ENCODE measurements at regions of chr5 and their contacts with region 1.

Region 1: DNA sequence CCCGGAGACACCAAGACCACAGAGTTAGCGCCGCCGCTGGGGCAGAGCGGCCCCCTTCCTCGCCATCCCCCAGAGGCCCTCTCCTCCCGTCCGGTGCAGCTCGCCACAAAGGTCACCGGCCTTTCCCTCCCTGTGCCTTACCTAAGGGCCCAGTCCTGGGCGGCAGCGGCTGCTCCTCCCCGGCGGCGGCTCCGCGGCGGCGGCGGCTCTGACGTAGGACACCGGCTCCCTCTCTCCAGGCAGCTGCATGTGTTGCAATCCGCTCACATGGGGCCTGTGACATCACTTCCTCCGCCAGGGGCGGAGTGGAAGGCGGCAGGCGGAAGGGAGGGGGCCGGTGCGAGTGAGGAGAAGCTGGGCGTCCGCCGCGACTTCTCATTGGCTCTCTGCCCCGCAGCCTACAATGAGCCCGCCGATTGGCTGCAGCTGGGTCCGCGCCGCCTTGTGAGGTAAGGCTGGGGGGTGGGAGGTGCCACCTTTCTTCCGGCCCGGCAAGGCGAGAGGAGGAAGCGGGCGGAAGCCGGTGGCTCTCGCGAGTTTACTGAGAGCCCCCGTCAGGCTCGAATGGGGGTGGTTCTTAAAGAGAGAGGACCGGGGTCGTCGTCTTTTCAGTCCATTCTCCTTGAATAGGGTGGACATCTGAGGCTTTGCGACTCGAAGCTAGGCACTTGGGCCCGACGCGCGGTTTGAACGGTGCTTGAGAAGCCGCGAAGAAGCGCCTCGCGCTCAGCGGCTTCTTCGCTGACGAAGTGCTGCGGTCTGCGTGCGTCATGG is at the start of gene ETF1:
- DNase-seq: peak; percentile 99 to 100 (median 99)
- ATAC-seq: peak; percentile 89
- H3K4me3 ChIP-seq: peak within 1 kb of the TSS; percentile 86 to 90
- H3K4me3 Mint-ChIP-seq: peak within 1 kb of the TSS; percentile 100
- H3K27ac ChIP-seq: peak within 1 kb of the TSS; percentile 98 to 100
- H3K27ac Mint-ChIP-seq: peak within 1 kb of the TSS; percentile 100
- H3K4me1 ChIP-seq: peaks cover 52% of the 10 kb centered on the region
- H3K4me1 Mint-ChIP-seq: peaks cover 72% of the 10 kb centered on the region
- H3K27me3 ChIP-seq: no peaks in the 10 kb centered on the region
- H3K27me3 Mint-ChIP-seq: no peaks in the 10 kb centered on the region
- CTCF ChIP-seq: no peak
- total RNA-seq, gene ETF1: 241 to 247 TPM

Region 2: GRCh38 chr5:138035605-138036537 is 507.3 kb before region 1 on chr5:
- CTCF ChIA-PET with region 1: no interaction called
- POLR2A ChIA-PET with region 1: no interaction called
- intact Hi-C with region 1: loop called (anchors 10 kb)
- DNase-seq: peak; percentile 21 to 90 (median 61)
- ATAC-seq: peak; percentile 40
- H3K4me3 ChIP-seq: no peak overlapping the region
- H3K4me3 Mint-ChIP-seq: no peak overlapping the region
- H3K27ac ChIP-seq: no peak overlapping the region
- H3K27ac Mint-ChIP-seq: no peak overlapping the region
- H3K4me1 ChIP-seq: peaks cover 23% of the 10 kb centered on the region
- H3K4me1 Mint-ChIP-seq: peaks cover 30% of the 10 kb centered on the region
- H3K27me3 ChIP-seq: no peaks in the 10 kb centered on the region
- H3K27me3 Mint-ChIP-seq: no peaks in the 10 kb centered on the region
- CTCF ChIP-seq: peak; percentile 99

Region 3: GRCh38 chr5:138264183-138264582 is 279.0 kb before region 1 on chr5:
- CTCF ChIA-PET with region 1: no interaction called
- POLR2A ChIA-PET with region 1: no interaction called
- intact Hi-C with region 1: no loop called
- DNase-seq: no peak
- ATAC-seq: no peak
- H3K4me3 ChIP-seq: no peak overlapping the region
- H3K4me3 Mint-ChIP-seq: no peak overlapping the region
- H3K27ac ChIP-seq: no peak overlapping the region
- H3K27ac Mint-ChIP-seq: no peak overlapping the region
- H3K4me1 ChIP-seq: no peaks in the 10 kb centered on the region
- H3K4me1 Mint-ChIP-seq: no peaks in the 10 kb centered on the region
- H3K27me3 ChIP-seq: peaks cover 0 to 2% of the 10 kb centered on the region in 2 experiments
- H3K27me3 Mint-ChIP-seq: peaks cover 14% of the 10 kb centered on the region
- CTCF ChIP-seq: no peak

Region 4: DNA sequence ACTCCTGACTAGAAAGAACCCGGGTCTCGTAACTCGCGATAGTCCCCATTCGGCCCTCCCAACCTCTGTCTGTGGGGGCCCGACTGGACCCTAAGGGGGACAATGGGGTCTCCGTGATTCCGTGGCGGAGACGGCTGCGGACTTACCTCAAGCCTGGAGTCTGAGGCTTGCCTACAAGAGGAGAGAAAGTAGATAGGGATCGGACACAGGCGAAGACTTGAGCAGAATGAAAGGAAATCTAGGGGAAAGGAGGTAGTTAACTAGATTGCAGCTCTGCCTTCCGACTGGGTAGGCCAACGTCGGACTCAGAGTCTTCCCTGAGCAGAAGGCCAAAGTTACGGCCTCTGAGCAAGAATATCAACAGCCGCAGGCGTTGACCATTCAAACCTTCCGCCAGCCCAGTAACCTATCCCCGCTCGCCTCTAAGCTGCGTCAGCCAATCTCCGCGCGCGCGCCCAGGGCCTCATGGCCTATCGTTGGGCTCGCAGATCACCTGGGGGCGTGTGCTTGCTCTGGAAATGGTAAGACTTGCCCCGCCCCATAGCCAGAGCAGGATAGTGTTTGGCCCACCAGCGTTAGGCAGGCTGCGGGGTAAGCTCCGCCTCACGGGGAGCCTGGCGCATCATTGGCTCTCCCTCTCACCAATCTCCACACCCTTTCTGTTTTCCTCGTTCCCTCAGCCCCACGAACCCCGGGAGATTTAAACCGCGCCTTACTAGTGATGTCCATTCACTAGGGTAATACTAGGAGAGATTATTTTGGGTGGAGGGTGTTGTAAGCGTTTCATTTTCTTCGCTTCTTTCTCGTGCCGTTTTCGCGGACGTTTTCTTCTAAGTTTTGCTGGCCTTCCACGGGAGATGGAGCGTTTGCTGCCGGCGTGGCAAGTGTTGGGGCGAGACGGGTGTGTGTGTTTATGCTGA is 211.4 kb before region 1 on chr5 and contains the start of gene CDC25C:
- CTCF ChIA-PET with region 1: no interaction called
- POLR2A ChIA-PET with region 1: interaction called, 5 read pairs
- intact Hi-C with region 1: loop called (anchors 1 to 5 kb)
- DNase-seq: peak; percentile 91 to 99 (median 95)
- ATAC-seq: peak; percentile 100
- H3K4me3 ChIP-seq: peak within 1 kb of the TSS; percentile 52 to 69
- H3K4me3 Mint-ChIP-seq: peak within 1 kb of the TSS; percentile 86
- H3K27ac ChIP-seq: peak within 1 kb of the TSS in 1 of 2 experiments; percentile 58
- H3K27ac Mint-ChIP-seq: peak within 1 kb of the TSS; percentile 45
- H3K4me1 ChIP-seq: peaks cover 5% of the 10 kb centered on the region
- H3K4me1 Mint-ChIP-seq: peaks cover 16% of the 10 kb centered on the region
- H3K27me3 ChIP-seq: no peaks in the 10 kb centered on the region
- H3K27me3 Mint-ChIP-seq: no peaks in the 10 kb centered on the region
- CTCF ChIP-seq: no peak
- total RNA-seq, gene CDC25C: not detected

Region 5: GRCh38 chr5:138391859-138392386 is 151.2 kb before region 1 on chr5:
- CTCF ChIA-PET with region 1: no interaction called
- POLR2A ChIA-PET with region 1: no interaction called
- intact Hi-C with region 1: no loop called
- DNase-seq: no peak
- ATAC-seq: no peak
- H3K4me3 ChIP-seq: no peak overlapping the region
- H3K4me3 Mint-ChIP-seq: no peak overlapping the region
- H3K27ac ChIP-seq: no peak overlapping the region
- H3K27ac Mint-ChIP-seq: no peak overlapping the region
- H3K4me1 ChIP-seq: no peaks in the 10 kb centered on the region
- H3K4me1 Mint-ChIP-seq: no peaks in the 10 kb centered on the region
- H3K27me3 ChIP-seq: no peaks in the 10 kb centered on the region
- H3K27me3 Mint-ChIP-seq: no peaks in the 10 kb centered on the region
- CTCF ChIP-seq: no peak

Region 6: DNA sequence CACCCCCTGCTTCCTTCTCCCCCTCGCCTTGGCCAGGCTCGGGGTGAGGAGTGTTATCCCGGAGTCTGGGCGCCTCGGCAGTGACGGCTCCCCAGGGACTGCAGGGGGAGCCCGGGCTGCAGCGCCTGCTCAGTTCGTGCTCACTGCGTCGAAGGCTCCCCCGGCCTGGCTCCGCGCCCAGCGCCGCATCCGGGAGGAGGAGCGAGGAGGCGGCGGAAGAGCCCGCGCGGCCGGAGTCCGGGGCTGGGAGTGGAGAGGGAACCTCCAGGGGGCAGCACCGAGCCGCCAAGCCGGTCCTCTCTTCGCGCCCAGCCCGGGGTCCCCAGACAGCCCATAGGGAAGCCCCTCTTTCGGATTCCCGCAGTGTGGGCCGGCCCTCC is 79.1 kb before region 1 on chr5:
- CTCF ChIA-PET with region 1: interaction called, 3 read pairs
- POLR2A ChIA-PET with region 1: interaction called, 20 read pairs
- intact Hi-C with region 1: loop called (anchors 1 kb)
- DNase-seq: peak; percentile 85 to 98 (median 93)
- ATAC-seq: peak; percentile 47
- H3K4me3 ChIP-seq: peak overlapping the region; percentile 91 to 97
- H3K4me3 Mint-ChIP-seq: peak overlapping the region; percentile 91
- H3K27ac ChIP-seq: peak overlapping the region; percentile 79 to 100
- H3K27ac Mint-ChIP-seq: peak overlapping the region; percentile 93
- H3K4me1 ChIP-seq: peaks cover 51% of the 10 kb centered on the region
- H3K4me1 Mint-ChIP-seq: peaks cover 48% of the 10 kb centered on the region
- H3K27me3 ChIP-seq: no peaks in the 10 kb centered on the region
- H3K27me3 Mint-ChIP-seq: no peaks in the 10 kb centered on the region
- CTCF ChIP-seq: peak; percentile 87

Region 7: DNA sequence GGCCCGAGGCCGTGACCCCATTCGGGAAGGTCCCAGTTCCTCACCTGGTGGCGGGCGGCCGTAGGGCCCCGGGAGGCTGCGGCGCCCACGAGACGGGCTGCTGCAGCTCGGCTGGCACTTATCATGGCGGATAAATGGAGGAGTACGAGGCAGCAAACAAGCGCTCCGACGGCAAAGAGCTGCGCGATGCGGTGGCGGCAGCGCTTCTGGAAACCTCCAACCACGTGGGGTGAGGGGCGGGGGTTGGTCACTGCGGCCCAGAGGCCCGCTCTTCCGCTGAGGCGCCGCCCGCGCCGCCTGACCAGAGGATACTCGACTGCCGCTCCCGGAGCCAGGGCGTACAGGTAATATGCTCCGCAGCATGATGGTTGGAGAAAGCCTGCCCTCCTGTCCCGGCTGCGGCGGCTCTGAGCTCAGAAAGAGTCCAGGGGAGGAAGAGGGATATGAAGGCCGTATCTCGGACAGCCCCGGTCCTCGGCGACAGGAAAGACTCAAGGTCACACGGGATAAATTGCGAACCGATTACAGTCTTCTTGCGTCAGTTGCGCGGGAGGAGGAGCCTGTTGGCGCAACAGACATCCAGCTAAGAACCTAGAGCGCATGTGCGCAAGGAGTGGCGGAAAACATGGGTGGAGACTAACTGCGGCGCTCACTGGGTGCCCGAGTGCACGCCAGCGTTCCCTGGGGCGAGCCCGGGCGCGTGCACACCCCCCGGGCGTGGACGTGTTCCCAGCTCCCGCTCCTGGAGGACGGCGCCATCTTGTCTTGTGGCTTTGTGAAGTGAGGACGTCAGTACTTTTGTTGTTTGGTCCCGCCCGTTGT is 32.3 kb after region 1 on chr5 and contains the start of gene HSPA9:
- CTCF ChIA-PET with region 1: interaction called, 6 read pairs
- POLR2A ChIA-PET with region 1: interaction called, 45 read pairs
- intact Hi-C with region 1: loop called (anchors 1 kb)
- DNase-seq: peak; percentile 91 to 100 (median 97)
- ATAC-seq: peak; percentile 82
- H3K4me3 ChIP-seq: peak within 1 kb of the TSS; percentile 77 to 80
- H3K4me3 Mint-ChIP-seq: peak within 1 kb of the TSS; percentile 99
- H3K27ac ChIP-seq: peak within 1 kb of the TSS; percentile 98 to 99
- H3K27ac Mint-ChIP-seq: peak within 1 kb of the TSS; percentile 100
- H3K4me1 ChIP-seq: peaks cover 21% of the 10 kb centered on the region
- H3K4me1 Mint-ChIP-seq: peaks cover 43% of the 10 kb centered on the region
- H3K27me3 ChIP-seq: no peaks in the 10 kb centered on the region
- H3K27me3 Mint-ChIP-seq: no peaks in the 10 kb centered on the region
- CTCF ChIP-seq: no peak
- total RNA-seq, gene HSPA9: 464 to 500 TPM

Region 8: GRCh38 chr5:139363937-139364336 is 820.8 kb after region 1 on chr5:
- CTCF ChIA-PET with region 1: no interaction called
- POLR2A ChIA-PET with region 1: no interaction called
- intact Hi-C with region 1: no loop called
- DNase-seq: peak in 1 of 9 experiments; percentile 9
- ATAC-seq: no peak
- H3K4me3 ChIP-seq: no peak overlapping the region
- H3K4me3 Mint-ChIP-seq: no peak overlapping the region
- H3K27ac ChIP-seq: no peak overlapping the region
- H3K27ac Mint-ChIP-seq: no peak overlapping the region
- H3K4me1 ChIP-seq: no peaks in the 10 kb centered on the region
- H3K4me1 Mint-ChIP-seq: peaks cover 10% of the 10 kb centered on the region
- H3K27me3 ChIP-seq: no peaks in the 10 kb centered on the region
- H3K27me3 Mint-ChIP-seq: no peaks in the 10 kb centered on the region
- CTCF ChIP-seq: no peak

Region 9: GRCh38 chr5:139403787-139404483 is 860.8 kb after region 1 on chr5 and contains the start of gene SPATA24:
- CTCF ChIA-PET with region 1: no interaction called
- POLR2A ChIA-PET with region 1: interaction called, 7 read pairs
- intact Hi-C with region 1: loop called (anchors 1 kb)
- DNase-seq: peak; percentile 93 to 99 (median 98)
- ATAC-seq: peak; percentile 88
- H3K4me3 ChIP-seq: peak within 1 kb of the TSS; percentile 61
- H3K4me3 Mint-ChIP-seq: peak within 1 kb of the TSS; percentile 95
- H3K27ac ChIP-seq: peak within 1 kb of the TSS; percentile 68 to 94
- H3K27ac Mint-ChIP-seq: peak within 1 kb of the TSS; percentile 99
- H3K4me1 ChIP-seq: peaks cover 16% of the 10 kb centered on the region
- H3K4me1 Mint-ChIP-seq: peaks cover 32% of the 10 kb centered on the region
- H3K27me3 ChIP-seq: no peaks in the 10 kb centered on the region
- H3K27me3 Mint-ChIP-seq: no peaks in the 10 kb centered on the region
- CTCF ChIP-seq: no peak
- total RNA-seq, gene SPATA24: 2.2 to 3.0 TPM